GM10248 (cell line): ENCODE measurements at regions of chr13 and their contacts with region 1.

Region 1: DNA sequence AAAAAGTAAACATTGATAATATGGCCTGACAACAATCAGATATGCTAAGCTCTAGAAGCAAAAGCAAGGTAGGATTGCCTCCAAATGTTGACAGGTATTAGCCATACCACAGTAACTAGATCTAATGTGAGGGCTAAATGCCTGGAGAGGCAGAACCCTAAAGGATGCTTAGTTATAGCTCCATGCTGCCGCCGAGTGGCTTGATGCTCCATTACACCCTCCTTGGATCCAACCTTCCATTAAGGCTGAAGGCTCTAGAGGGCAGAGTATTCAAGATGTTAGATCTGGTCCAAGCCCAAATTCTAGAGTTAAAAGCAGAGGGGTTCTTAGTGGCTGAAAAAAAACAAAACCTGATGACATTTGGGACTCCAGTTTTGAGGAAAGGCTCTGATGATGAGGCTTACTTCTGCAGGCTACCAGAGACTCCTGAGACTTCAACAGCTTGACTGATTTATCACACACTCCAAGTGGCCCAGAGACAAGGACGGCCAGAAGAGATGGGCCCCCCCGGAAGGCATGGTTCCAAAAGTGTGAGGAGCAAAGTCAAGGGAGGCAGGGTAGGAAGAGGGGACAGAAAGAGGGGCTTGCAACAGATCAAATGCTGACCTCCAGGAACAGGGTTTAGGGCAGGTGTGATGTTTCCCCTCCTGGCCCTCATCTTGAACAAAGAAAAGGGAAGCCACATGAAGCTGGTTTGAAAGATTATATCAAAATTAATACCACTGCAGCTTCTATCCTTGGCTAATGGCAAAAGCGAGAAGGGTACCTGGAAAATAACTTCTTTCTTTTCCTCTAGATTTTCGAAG is 21.9 kb upstream of the CPB2 start:
- DNase-seq: peak; percentile 58
- CTCF ChIP-seq: peak; percentile 88

Region 2: DNA sequence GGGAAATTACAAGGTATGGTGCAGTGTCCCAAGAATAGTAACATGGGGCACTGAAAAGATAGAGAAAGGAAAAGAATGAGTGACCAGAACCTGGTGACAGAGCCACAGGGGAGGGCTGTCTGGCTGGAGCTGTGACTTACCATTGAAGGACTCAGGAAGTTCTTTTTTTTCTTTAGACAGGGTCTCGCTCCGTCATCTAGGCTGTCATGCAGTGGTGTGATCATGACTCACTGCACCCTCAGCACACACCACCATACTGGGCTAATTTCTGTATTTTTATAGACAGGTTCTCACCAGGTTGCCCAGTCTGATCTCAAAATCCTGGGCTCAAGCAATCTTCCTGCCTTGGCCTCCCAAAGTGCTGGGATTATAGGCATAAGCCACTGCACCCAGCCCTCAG is 13.2 kb before region 1 on chr13:
- CTCF ChIA-PET with region 1: interaction called, 64 read pairs
- POLR2A ChIA-PET with region 1: no interaction called
- DNase-seq: no peak
- CTCF ChIP-seq: no peak

Region 3: GRCh38 chr13:46495651-46496050 is 368.9 kb after region 1 on chr13:
- CTCF ChIA-PET with region 1: no interaction called
- POLR2A ChIA-PET with region 1: no interaction called
- DNase-seq: no peak
- CTCF ChIP-seq: no peak

Region 4: GRCh38 chr13:46577696-46578589 is 451.2 kb after region 1 on chr13:
- CTCF ChIA-PET with region 1: no interaction called
- POLR2A ChIA-PET with region 1: no interaction called
- DNase-seq: no peak
- CTCF ChIP-seq: no peak